ENCODE measurements at regions of chr7 and their contacts with region 1.

Region 1: DNA sequence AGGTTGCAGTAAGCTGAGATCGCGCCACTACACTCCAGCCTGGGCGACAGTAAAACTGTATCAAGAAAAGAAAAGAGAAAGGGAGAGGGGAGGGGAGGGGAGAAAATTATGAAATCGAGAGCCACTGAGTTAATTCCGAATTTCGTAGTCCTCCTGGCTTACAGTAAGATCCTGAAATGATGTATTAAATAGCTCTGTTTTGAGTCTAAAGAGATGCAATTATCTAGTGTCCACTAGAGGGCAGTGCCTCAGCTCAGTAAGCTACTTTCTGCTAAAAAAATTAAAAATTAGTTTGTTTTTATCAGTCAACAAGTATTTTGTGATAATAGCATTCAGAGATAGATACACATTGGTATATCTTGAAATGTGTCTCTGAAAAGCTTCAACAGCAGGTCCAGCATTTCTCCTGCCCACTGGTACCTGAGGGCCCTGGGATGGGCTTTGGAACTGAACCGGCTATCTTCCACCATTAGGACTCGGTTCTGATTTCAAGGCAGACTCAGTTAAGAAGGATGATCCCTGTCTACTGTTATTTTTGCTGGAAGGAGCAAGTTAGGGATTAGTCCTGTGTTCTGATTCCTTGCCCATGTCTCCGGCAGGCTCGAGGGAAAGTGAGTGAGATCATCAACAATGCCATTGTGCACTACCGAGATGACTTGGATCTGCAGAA is 19.5 kb downstream of the TSPAN33 start:
- DNase-seq: no peak
- H3K4me3 ChIP-seq: no peak overlapping the region
- H3K27ac ChIP-seq: no peak overlapping the region
- H3K4me1 ChIP-seq: peaks cover 0 to 9% (median 7%) of the 10 kb centered on the region in 4 donors
- H3K27me3 ChIP-seq: peaks cover 0 to 23% of the 10 kb centered on the region in 2 donors
- CTCF ChIP-seq: peak; percentile 72 to 81

Region 2: GRCh38 chr7:129208667-129209066 is 44.7 kb after region 1 on chr7:
- intact Hi-C with region 1: loop called (anchors 2 kb)
- DNase-seq: no peak
- H3K4me3 ChIP-seq: no peak overlapping the region
- H3K27ac ChIP-seq: no peak overlapping the region
- H3K4me1 ChIP-seq: peaks cover 0 to 3% (median 0%) of the 10 kb centered on the region in 4 donors
- H3K27me3 ChIP-seq: no peaks in the 10 kb centered on the region
- CTCF ChIP-seq: no peak

Region 3: DNA sequence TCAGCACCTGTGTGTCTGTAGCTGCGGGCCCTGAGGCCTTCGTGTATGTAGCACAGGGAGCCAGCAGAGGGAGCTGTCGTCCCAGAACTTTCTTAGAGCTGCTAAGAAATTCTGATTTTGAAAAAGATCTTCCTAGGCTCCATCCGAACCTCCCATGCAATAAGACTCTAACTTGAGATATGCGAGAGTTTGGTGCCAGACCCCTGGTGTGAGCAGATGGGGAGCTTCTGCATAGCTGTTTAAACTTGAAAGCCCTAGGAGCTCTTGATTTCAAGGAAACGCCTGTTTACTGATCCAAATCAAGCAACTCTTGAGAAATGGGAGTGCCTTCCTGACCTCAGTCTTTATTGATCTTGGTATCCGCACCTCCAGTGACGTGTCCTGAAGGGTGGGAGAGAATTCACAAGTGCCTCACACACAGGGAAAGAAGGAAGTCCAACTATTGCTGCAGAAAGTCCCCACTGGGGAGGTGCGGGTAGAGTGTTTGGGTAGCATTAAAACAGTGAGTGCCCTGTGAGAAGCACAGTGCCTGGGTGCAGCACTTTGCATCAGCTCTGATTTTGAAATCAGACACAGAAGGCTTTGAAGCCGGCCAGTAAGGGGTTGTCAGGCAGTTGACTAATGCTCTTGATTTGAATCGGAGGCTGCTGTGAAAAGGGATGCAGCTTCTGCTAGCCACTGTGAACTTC is 203.8 kb after region 1 on chr7:
- intact Hi-C with region 1: no loop called
- DNase-seq: peak; percentile 65 to 78
- H3K4me3 ChIP-seq: no peak overlapping the region
- H3K27ac ChIP-seq: no peak overlapping the region
- H3K4me1 ChIP-seq: peaks cover 0 to 10% (median 3%) of the 10 kb centered on the region in 4 donors
- H3K27me3 ChIP-seq: no peaks in the 10 kb centered on the region
- CTCF ChIP-seq: peak; percentile 79 to 80